ENCODE measurements at regions of chr14 and their contacts with region 1.

Region 1: GRCh38 chr14:23910101-23910875 is 43.3 kb upstream of the DHRS4 start:
- DNase-seq: peak; percentile 33
- H3K4me3 ChIP-seq: no peak overlapping the region
- CTCF ChIP-seq: peak; percentile 80

Region 2: DNA sequence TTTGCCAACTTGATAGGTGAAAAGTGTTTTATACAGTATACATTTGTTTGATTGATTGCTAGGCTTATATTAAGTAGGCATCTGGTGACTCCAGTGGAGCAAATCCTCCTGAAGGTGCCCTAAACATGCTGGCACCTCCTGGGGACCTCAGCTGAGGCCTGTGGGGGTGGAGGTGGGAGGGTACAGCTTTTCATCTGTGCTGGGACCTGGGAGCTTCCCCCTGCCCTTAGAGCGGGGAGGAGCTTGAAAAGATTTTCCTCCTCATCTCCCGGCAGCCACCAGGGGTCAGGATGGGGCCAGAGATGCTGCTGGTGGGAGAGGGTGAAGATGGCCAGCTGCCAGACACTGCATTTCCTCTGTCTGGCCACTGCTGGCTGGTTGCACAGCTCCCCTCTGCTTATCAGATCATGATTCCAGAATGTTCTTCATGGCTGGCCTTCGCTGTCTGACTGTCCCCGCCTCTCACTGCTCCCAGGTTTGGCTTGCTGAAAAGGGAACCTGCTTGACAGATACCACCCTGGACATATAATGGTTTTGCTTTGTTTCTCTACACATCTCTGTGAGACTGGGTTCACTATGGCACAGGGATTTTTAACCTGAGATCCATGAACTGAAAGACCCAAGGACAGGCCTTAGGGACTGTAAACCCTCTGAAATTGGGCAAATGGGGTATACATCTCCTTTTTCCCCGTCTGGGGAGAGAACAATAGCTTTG is 321.2 kb before region 1 on chr14:
- CTCF ChIA-PET with region 1: interaction called, 56 read pairs
- POLR2A ChIA-PET with region 1: interaction called, 3 read pairs
- DNase-seq: peak; percentile 44
- H3K4me3 ChIP-seq: no peak overlapping the region
- CTCF ChIP-seq: peak; percentile 96

Region 3: DNA sequence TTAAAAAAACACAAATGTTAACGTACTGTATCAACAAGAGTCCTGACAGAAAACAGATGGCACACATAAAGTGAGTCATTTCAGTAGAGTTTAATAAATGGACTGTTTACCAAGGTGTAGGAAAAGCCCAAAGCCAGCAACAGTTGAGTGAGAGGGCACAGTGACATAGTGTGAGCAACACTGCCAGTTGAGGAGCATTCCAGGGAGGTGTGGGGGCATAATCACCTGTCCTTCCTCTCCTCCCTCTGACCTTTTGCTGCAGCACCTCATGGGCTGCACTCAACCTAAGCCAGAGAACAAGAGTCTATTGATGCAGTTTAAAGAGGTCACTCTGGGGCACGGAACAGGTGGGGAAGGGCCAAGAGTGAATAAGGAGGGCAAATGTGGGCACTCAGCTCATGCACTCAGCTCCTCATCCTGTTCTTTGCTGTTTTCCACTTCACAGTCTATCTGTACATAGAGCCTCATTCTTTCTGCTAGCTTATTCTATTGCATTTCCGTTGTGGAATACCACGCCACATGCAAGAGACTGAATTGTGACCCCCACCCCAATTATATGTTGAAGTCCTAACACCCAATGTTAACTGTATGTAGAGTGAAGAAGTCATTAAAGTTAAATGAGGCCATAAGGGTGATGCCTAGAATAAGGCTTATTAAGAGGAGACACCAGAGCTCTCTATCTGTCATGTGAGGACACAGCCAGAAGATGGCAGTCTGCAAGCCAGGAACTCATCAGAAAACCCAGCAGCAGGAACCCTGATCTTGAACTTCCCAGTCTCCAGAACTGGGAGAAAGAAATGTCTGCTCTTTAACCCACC is 244.7 kb before region 1 on chr14:
- CTCF ChIA-PET with region 1: interaction called, 94 read pairs
- POLR2A ChIA-PET with region 1: no interaction called
- DNase-seq: peak; percentile 7
- H3K4me3 ChIP-seq: no peak overlapping the region
- CTCF ChIP-seq: peak; percentile 71

Region 4: DNA sequence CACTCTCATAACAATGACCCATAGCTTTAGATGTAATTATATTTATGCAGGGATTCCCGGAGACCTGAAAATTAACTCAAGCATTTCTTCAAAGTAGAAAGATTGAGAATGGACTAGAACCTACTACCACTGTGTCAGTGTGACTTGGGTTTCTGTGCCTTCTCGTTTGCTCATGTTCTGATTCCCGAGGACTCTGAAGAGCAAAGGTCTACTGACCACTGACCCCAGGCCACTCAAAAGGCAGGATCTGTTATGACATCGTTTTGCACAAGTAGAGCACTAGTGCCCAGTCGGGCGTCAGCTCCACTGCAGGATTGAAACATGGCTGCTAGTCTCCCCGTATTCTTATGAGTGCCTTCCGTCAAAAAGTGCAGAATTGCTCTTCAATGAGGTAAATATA is 10.5 kb before region 1 on chr14:
- CTCF ChIA-PET with region 1: interaction called, 12 read pairs
- POLR2A ChIA-PET with region 1: no interaction called
- DNase-seq: no peak
- H3K4me3 ChIP-seq: no peak overlapping the region
- CTCF ChIP-seq: no peak

Region 5: DNA sequence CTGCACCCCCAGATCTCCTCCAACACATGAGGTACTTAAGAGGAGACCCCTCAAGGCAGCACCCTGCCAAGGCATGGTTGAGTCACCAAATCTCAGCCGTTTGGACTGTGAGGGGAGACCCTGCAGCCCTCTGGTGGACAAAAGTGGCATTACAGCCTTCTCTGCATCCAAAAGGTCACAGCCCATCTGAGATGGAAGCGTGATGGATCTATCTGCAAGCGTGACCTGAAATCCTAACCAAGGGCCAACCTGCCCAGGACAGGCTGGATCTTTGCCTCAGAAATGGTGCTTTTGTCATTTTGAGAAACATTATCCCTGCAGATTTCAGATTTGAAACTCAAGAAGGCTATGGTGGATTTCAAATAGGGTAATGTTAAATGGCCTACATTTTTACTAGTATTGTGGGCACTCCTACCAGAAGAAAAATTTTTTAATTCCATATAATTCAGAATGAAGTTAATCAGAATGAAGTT is 19.6 kb after region 1 on chr14:
- CTCF ChIA-PET with region 1: interaction called, 58 read pairs
- POLR2A ChIA-PET with region 1: no interaction called
- DNase-seq: no peak
- H3K4me3 ChIP-seq: no peak overlapping the region
- CTCF ChIP-seq: peak; percentile 87

Measured in AG04449 (cell line).